ENCODE measurements at regions of chr11 and their contacts with region 1.

Region 1: DNA sequence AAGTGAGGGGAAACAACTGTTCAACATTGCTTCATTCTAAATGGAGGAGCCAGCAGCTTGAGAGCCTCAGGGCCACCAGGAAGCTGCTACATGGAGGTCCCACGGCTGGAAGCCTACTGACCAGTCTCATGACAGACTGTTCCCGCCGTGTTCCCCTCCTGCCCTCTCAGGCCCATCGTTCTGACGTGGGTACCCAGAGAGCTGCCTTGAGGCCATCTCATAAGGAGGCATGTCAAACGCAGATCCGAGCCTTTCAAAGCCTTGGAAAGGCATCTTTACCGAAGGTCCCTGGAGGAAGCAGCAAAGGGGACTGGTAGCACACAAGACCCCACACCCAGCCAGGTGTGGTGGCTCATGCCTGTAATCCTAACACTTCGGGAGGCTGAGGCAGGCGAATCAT is 8.3 kb upstream of the ARHGEF17 start:
- DNase-seq: no peak
- ATAC-seq: no peak

Region 2: GRCh38 chr11:73335204-73335923 is 35.6 kb after region 1 on chr11:
- intact Hi-C with region 1: loop called in 1 of 2 experiments (anchors 5 kb)
- DNase-seq: peak; percentile 64 to 80
- ATAC-seq: peak; percentile 86